ENCODE measurements at regions of chr2 and their contacts with region 1.

Region 1: DNA sequence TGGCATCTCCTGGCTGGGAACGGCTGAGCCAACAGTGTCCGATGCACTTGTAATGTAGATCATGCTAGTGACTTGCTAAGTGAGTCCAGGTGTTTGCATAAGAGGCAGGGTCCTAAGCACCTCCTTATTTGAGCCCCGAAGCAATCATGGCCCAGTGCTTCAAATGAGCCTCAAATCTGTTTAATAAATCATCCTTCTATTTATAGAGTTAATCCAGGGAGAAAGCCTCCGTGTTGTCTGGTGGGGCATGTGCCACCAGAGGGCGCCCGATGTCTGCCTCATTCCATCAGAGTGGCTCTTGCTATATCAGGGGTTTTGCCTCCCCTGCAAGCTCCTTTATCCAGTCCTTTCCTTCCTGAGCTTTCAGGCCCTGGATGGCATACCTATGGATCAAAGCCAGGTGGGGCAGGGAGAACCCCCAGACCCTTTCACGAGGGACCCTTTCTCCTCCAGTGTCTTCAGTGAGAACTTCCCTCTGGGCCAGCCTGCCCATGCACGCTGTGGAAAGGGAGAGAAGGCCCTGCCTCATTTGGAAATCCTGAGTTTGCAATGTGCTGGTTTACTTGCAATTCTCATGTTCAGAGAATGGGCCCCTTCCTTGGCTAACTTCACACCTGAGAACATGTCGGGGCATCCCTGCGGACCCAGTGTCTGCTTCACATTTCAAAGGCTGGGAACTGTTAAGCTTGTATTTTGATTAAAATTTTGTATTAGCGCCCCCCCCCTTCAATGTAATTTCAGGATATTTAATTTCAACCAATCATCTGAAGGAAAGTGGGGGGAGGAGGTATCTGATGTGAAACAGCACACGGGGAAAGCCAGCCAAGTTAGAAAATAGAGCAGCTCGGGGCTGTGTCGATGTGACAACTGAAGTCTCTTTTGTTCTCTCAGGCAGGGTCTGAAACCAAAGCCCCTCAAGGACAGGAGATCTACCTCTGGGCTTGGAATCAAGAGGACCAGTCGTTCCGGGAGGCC is 39.7 kb downstream of the RDH14 start:
- DNase-seq: peak; percentile 74 to 80
- ATAC-seq: peak; percentile 93 to 98
- H3K4me3 ChIP-seq: no peak overlapping the region
- H3K27ac ChIP-seq: no peak overlapping the region
- H3K4me1 ChIP-seq: no peaks in the 10 kb centered on the region
- CTCF ChIP-seq: peak; percentile 97
- EP300 ChIP-seq: no peak
- POLR2A ChIP-seq: no peak
- RAD21 ChIP-seq: peak; percentile 96 to 98

Region 2: DNA sequence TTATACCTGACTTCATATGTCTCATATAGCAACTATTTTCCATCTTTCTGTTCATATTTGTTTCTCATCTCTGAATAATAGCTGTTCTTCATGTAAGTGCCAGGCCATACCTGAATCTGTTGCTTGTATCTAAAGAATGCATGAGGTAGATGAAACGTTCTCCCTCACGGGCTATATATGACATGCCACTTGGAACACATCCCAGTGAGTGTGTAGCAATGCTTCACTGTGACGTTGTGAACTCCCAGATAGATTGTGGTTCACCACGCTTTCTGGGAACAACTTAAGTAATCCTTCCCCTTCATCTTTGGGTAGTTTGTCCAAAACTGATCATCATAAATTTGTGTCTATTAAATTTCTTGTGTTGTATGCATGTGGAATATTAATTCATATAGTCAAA is 20.4 kb before region 1 on chr2:
- CTCF ChIA-PET with region 1: interaction called, 22 read pairs
- POLR2A ChIA-PET with region 1: no interaction called
- DNase-seq: no peak
- ATAC-seq: 0 out of 6 replicates have a peak, but pooled peaks of 1 of the 2 experiments have one; percentile 40
- H3K4me3 ChIP-seq: no peak overlapping the region
- H3K27ac ChIP-seq: no peak overlapping the region
- H3K4me1 ChIP-seq: no peaks in the 10 kb centered on the region
- CTCF ChIP-seq: no peak
- EP300 ChIP-seq: no peak
- POLR2A ChIP-seq: no peak
- RAD21 ChIP-seq: no peak

Region 3: DNA sequence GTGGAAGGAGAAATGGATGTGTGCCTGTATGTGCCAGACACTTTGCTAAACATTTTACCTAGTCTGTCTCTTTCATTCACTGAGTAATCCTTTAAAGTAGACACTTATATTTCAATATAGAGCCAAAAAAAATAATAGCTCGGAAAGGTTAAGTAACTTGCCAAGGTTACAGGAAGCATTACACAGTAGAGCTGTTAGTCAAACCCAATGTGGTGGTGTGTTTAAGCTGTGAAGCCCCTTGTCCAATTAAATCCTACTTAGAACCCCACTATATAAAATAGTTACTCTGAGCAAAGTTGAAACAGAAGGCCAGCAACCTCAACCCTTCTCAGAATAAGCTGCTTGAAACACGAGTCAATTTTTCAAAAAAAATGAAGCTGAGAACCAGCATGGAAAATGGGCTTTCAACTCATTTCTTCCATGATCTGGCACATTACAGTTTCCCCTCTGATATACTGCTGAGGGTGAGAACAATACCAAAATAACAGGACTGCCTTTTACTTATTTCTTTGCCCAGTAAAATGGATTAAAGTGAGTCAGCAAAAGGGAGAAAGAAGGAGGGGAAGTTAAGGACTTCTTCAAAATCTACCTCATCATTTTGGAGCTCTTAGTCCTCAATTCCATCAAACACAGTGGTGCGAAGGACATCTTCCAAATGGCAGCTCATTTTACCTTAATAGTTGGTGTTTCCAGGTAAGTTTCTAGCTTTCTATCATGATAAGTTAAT is 31.8 kb after region 1 on chr2:
- CTCF ChIA-PET with region 1: interaction called, 10 read pairs
- POLR2A ChIA-PET with region 1: no interaction called
- DNase-seq: no peak
- ATAC-seq: no peak
- H3K4me3 ChIP-seq: no peak overlapping the region
- H3K27ac ChIP-seq: no peak overlapping the region
- H3K4me1 ChIP-seq: peaks cover 7% of the 10 kb centered on the region; the same call in 2 of the 3 replicates
- CTCF ChIP-seq: no peak
- EP300 ChIP-seq: no peak
- POLR2A ChIP-seq: no peak
- RAD21 ChIP-seq: no peak

Region 4: DNA sequence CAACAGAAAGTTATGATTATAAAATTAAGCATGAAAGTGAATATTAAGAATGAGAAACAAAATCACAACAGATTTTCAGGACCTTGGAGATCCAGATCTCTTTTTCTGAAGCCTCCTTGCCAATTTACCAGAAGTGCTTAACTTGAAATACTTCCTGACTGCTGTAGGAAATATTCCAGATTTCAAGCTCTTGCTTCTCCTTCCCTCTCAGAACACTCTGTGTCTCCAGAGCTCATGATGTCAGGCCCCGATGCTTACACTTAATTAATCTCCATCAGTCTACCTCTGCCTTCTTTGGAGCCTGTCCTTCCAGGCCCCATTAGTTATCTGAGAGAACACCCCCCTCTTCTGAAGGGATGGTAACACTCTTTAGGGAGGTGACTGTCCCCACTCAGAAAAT is 89.4 kb after region 1 on chr2:
- CTCF ChIA-PET with region 1: no interaction called
- POLR2A ChIA-PET with region 1: no interaction called
- DNase-seq: no peak
- ATAC-seq: no peak
- H3K4me3 ChIP-seq: no peak overlapping the region
- H3K27ac ChIP-seq: no peak overlapping the region
- H3K4me1 ChIP-seq: no peaks in the 10 kb centered on the region
- CTCF ChIP-seq: no peak
- EP300 ChIP-seq: no peak
- POLR2A ChIP-seq: no peak
- RAD21 ChIP-seq: no peak

Region 5: GRCh38 chr2:18741895-18742732 is 221.4 kb after region 1 on chr2:
- CTCF ChIA-PET with region 1: interaction called, 20 read pairs
- POLR2A ChIA-PET with region 1: no interaction called
- DNase-seq: no peak
- ATAC-seq: no peak
- H3K4me3 ChIP-seq: no peak overlapping the region
- H3K27ac ChIP-seq: no peak overlapping the region
- H3K4me1 ChIP-seq: no peaks in the 10 kb centered on the region
- CTCF ChIP-seq: no peak
- EP300 ChIP-seq: no peak
- POLR2A ChIP-seq: no peak
- RAD21 ChIP-seq: no peak

Region 6: DNA sequence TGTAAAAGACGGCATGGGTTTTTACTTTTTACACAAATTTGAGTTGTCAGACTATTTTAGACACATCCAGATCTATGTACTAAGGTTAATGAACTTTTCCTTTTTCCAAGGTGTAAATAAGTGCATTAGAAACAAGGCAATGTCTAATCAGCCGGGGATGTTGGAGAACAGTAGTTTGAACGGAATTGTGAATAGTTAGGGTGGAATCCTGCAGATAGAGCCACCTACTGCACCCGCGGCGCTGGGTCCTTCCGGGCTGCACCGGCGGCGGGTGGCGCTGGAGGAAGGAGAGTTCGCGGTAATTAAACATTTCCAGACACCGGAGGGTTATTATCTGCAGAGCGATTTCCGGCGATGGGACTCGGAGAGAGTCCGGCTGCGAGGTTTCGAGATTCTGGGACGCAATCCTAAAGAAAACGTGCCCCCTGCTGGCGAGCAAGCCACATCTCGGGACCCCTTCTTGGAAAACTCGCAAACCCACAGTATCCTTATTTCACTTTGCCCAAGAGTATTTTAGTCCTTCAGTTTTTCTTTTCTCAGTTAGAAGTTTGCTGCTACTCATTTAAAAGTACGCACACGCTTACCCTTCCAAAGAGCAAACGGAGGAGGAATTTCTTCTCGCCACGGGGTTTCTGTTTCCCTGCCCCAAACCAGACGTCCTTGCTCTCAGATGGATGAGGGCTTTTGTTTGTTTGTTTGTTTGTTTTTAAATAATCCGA is 842.2 kb after region 1 on chr2:
- CTCF ChIA-PET with region 1: interaction called, 52 read pairs
- POLR2A ChIA-PET with region 1: interaction called, 3 read pairs
- DNase-seq: peak; percentile 87 to 89
- ATAC-seq: peak; percentile 64 to 81
- H3K4me3 ChIP-seq: peak overlapping the region; percentile 67
- H3K27ac ChIP-seq: peak overlapping the region; percentile 73 to 76
- H3K4me1 ChIP-seq: peaks cover 9% of the 10 kb centered on the region
- CTCF ChIP-seq: peak; percentile 97
- EP300 ChIP-seq: no peak
- POLR2A ChIP-seq: no peak
- RAD21 ChIP-seq: peak; percentile 94 to 99

Region 7: GRCh38 chr2:19863303-19864041 is 1342.7 kb after region 1 on chr2:
- CTCF ChIA-PET with region 1: interaction called, 57 read pairs
- POLR2A ChIA-PET with region 1: no interaction called
- DNase-seq: peak; percentile 70 to 72
- ATAC-seq: peak; percentile 87 to 93
- H3K4me3 ChIP-seq: no peak overlapping the region
- H3K27ac ChIP-seq: peak overlapping the region; percentile 69 to 77
- H3K4me1 ChIP-seq: peaks cover 17% of the 10 kb centered on the region
- CTCF ChIP-seq: peak; percentile 99
- EP300 ChIP-seq: no peak
- POLR2A ChIP-seq: no peak
- RAD21 ChIP-seq: peak; percentile 99 to 100

Measured in A549 (cell line).